GM12878 (cell line): ENCODE measurements at regions of chr2 and their contacts with region 1.

Region 1: GRCh38 chr2:176126929-176127773 is 2.4 kb upstream of the HOXD8 start:
- DNase-seq: no peak
- ATAC-seq: peak; percentile 49; the same call in 2 of the 3 replicates
- H3K4me3 ChIP-seq: no peak overlapping the region
- H3K27ac ChIP-seq: no peak overlapping the region
- H3K4me1 ChIP-seq: no peaks in the 10 kb centered on the region
- H3K27me3 ChIP-seq: peaks cover 7 to 29% of the 10 kb centered on the region in 2 experiments
- CTCF ChIP-seq: peak; percentile 61 to 77 (median 66)
- EP300 ChIP-seq: no peak
- POLR2A ChIP-seq: no peak
- RAD21 ChIP-seq: peak; percentile 81

Region 2: DNA sequence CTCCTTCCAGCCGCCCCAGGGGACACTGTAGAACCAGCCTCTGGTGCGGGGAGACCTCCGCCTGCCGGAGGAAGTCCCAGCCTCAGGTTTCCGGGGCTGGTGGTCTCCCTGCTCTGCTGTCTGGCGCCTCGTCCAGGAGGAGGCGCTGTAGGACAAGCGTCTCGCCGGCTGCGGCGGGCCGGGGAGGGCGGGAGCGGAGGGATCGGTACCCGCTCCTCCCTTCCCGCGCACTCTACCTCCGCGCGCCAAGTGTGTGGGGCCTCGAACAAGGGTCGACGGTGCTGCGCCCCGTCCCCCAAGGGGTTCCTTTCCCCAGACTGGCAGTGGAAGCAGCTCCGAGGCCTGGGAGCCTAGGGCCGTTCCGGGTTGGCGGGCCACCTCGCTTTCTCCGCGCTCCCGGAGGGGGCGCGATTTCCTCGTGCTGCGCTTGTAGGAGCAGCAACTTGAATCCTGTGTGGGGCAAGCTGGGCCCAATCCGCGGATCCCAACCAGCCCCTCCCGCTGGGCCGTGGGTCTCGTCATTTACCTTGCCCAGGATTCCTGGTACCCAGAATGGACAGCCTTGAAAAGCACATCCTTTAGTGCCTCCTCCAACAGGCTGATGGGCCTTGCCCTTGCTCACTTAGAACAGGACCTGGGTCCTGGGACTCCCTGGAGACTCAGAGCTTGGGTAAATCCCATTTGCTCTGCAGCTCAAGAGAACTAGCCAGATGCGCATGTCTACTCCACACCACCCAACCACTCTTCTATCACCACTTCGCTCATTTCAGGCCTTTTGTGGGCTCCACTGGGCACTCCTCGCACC is 13.6 kb after region 1 on chr2:
- CTCF ChIA-PET with region 1: interaction called, 22 read pairs
- POLR2A ChIA-PET with region 1: no interaction called
- RAD21 ChIA-PET with region 1: interaction called, 5 read pairs
- SMC1A ChIA-PET with region 1: interaction called, 10 read pairs
- in situ Hi-C with region 1: no loop called
- intact Hi-C with region 1: no loop called
- DNase-seq: peak; percentile 24
- ATAC-seq: peak; percentile 99
- H3K4me3 ChIP-seq: peak overlapping the region; percentile 37; the same call in 1 of the 2 replicates
- H3K27ac ChIP-seq: no peak overlapping the region
- H3K4me1 ChIP-seq: no peaks in the 10 kb centered on the region
- H3K27me3 ChIP-seq: peaks cover 0 to 11% of the 10 kb centered on the region in 2 experiments
- CTCF ChIP-seq: peak; percentile 75 to 93 (median 92)
- EP300 ChIP-seq: no peak
- POLR2A ChIP-seq: no peak; the same call in 1 of the 2 replicates
- RAD21 ChIP-seq: peak; percentile 95

Region 3: GRCh38 chr2:176638167-176639015 is 511.2 kb after region 1 on chr2:
- CTCF ChIA-PET with region 1: interaction called, 24 read pairs
- POLR2A ChIA-PET with region 1: no interaction called
- RAD21 ChIA-PET with region 1: interaction called, 7 read pairs
- SMC1A ChIA-PET with region 1: interaction called, 10 read pairs
- in situ Hi-C with region 1: loop called (anchors 5 kb)
- intact Hi-C with region 1: loop called (anchors 2 kb)
- DNase-seq: no peak
- ATAC-seq: peak; percentile 93
- H3K4me3 ChIP-seq: peak overlapping the region; percentile 64
- H3K27ac ChIP-seq: no peak overlapping the region
- H3K4me1 ChIP-seq: no peaks in the 10 kb centered on the region
- H3K27me3 ChIP-seq: peaks cover 2 to 8% of the 10 kb centered on the region in 2 experiments
- CTCF ChIP-seq: peak; percentile 68 to 74 (median 70)
- EP300 ChIP-seq: no peak
- POLR2A ChIP-seq: no peak
- RAD21 ChIP-seq: peak; percentile 73

Region 4: DNA sequence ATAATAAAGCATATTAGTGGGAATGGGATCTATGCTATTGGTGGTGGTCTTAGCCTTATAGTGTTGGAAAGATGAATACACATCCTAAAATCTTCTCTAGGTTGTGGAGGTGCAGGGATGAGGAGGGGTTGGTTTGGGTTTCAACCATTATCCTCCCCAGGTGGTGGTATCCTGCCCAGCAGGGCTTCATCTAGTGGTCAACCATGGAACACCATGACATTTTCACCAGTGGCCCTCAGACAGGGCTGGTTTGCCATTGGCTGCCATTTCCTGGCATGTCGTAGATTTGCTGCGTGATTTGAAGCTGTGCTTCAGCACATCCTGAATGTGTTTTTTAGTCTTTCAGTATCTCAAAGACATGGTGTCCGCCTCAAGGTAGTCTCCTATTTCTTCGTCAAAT is 694.2 kb after region 1 on chr2:
- CTCF ChIA-PET with region 1: interaction called, 6 read pairs
- POLR2A ChIA-PET with region 1: no interaction called
- RAD21 ChIA-PET with region 1: no interaction called
- SMC1A ChIA-PET with region 1: no interaction called
- in situ Hi-C with region 1: loop called (anchors 10 kb)
- intact Hi-C with region 1: loop called (anchors 5 kb)
- DNase-seq: no peak
- ATAC-seq: 0 out of 3 replicates have a peak, but pooled peaks have one; percentile 47
- H3K4me3 ChIP-seq: no peak overlapping the region
- H3K27ac ChIP-seq: no peak overlapping the region
- H3K4me1 ChIP-seq: no peaks in the 10 kb centered on the region
- H3K27me3 ChIP-seq: no peaks in the 10 kb centered on the region
- CTCF ChIP-seq: peak in 1 of 3 experiments; percentile 7; a peak in 1 of 6 replicates
- EP300 ChIP-seq: no peak
- POLR2A ChIP-seq: no peak
- RAD21 ChIP-seq: no peak